WTC11 (cell line): ENCODE measurements at regions of chr15 and their contacts with region 1.

Region 1: GRCh38 chr15:62254137-62254934 is 89.3 kb upstream of the C2CD4B start:
- DNase-seq: peak; percentile 84
- ATAC-seq: peak; percentile 85
- H3K4me3 Mint-ChIP-seq: no peak overlapping the region
- H3K27ac Mint-ChIP-seq: no peak overlapping the region
- H3K4me1 Mint-ChIP-seq: peaks cover 8% of the 10 kb centered on the region
- H3K27me3 Mint-ChIP-seq: peaks cover 3% of the 10 kb centered on the region; the same call in 1 of the 2 replicates
- CTCF ChIP-seq: peak; percentile 70

Region 2: GRCh38 chr15:62066663-62067447 is 187.5 kb before region 1 on chr15 and contains the start of gene C2CD4A:
- CTCF ChIA-PET with region 1: interaction called, 12 read pairs
- POLR2A ChIA-PET with region 1: no interaction called
- DNase-seq: peak; percentile 88
- ATAC-seq: peak; percentile 84
- H3K4me3 Mint-ChIP-seq: peak within 1 kb of the TSS; percentile 75
- H3K27ac Mint-ChIP-seq: peak within 1 kb of the TSS; percentile 39; the same call in 1 of the 2 replicates
- H3K4me1 Mint-ChIP-seq: peaks cover 16% of the 10 kb centered on the region
- H3K27me3 Mint-ChIP-seq: peaks cover 70% of the 10 kb centered on the region
- CTCF ChIP-seq: no peak
- total RNA-seq, gene C2CD4A: 0.32 to 0.42 TPM (median 0.41 TPM) in 3 replicates

Region 3: DNA sequence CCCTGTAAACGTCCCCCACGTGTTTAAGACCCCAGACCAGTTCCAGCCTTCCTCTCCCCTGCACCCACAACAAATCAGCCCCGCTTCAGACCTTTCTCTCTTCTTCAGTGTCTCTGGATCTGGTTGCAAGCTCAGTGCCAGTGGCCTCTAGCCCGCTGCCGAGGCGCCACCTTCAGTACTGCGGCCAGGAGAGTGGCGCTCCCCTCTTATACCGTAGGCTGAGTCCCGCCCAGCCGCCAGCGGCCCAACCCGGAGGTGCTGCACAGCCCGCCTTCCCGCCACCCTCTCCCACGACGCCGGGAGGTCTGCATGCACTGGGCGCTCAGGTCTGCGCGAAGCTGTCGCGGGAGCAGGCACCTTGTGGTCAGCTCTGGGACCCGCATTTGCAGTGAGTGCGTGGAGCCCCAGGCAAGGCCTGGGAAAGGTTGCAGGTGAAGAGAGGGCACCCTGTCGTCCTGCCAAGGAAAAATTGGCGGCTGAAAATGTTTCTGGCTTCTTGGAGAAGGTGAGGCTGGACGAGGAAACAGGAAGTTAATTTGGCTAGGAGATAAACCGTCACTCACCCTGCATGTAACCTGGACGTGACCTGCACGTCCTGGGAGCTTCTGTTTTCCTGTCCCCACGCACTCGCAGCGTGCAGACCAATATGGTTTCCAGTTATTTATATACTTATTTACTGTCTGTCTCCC is 89.1 kb before region 1 on chr15 and contains the start of gene C2CD4B:
- CTCF ChIA-PET with region 1: interaction called, 14 read pairs
- POLR2A ChIA-PET with region 1: no interaction called
- DNase-seq: peak; percentile 70
- ATAC-seq: peak; percentile 84
- H3K4me3 Mint-ChIP-seq: peak within 1 kb of the TSS; percentile 82
- H3K27ac Mint-ChIP-seq: no peak within 1 kb of the TSS
- H3K4me1 Mint-ChIP-seq: peaks cover 19% of the 10 kb centered on the region
- H3K27me3 Mint-ChIP-seq: peaks cover 70% of the 10 kb centered on the region
- CTCF ChIP-seq: no peak
- total RNA-seq, gene C2CD4B: 0.82 to 1.3 TPM (median 0.96 TPM) in 3 replicates

Region 4: GRCh38 chr15:62241135-62241770 is 13.1 kb before region 1 on chr15:
- CTCF ChIA-PET with region 1: interaction called, 62 read pairs
- POLR2A ChIA-PET with region 1: no interaction called
- DNase-seq: peak; percentile 79
- ATAC-seq: peak; percentile 95
- H3K4me3 Mint-ChIP-seq: no peak overlapping the region
- H3K27ac Mint-ChIP-seq: no peak overlapping the region
- H3K4me1 Mint-ChIP-seq: no peaks in the 10 kb centered on the region
- H3K27me3 Mint-ChIP-seq: peaks cover 2% of the 10 kb centered on the region; the same call in 1 of the 2 replicates
- CTCF ChIP-seq: peak; percentile 45; the same call in 1 of the 2 replicates

Region 5: GRCh38 chr15:62306851-62307504 is 52.6 kb after region 1 on chr15:
- CTCF ChIA-PET with region 1: interaction called, 29 read pairs
- POLR2A ChIA-PET with region 1: no interaction called
- DNase-seq: peak; percentile 62
- ATAC-seq: peak; percentile 99
- H3K4me3 Mint-ChIP-seq: no peak overlapping the region
- H3K27ac Mint-ChIP-seq: no peak overlapping the region
- H3K4me1 Mint-ChIP-seq: peaks cover 14% of the 10 kb centered on the region
- H3K27me3 Mint-ChIP-seq: no peaks in the 10 kb centered on the region
- CTCF ChIP-seq: peak; percentile 57